RWPE1 (cell line): ENCODE measurements at regions of chr9 and their contacts with region 1.

Region 1: DNA sequence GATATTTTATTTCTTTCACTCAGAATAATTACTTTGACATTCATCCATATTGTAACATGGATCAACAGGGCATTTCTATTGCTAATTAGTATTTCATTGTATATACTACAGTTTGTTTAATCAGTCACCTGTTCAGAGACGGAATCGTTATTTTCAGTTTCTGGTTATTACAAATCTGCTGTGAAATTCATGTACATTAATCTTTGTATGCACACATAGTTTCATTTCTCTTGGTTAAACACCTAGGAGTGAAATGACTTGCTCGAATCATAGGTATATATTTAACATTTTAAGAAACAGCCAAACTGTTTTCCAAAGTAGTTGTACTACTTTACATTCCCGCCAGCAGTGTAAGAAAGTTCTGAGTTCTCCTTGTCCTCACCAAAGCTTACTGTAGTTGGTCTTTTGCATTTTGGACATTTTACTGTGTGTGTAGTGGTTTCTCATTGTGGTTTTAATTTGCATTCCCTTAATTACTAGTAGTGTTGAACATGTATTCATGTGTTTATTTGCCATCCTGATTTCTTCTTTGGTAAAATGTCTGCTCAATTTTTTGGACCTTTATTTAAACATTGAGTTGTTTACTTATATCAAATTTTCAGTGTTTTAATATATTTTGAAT is 198.2 kb downstream of the SAXO1 start:
- DNase-seq: no peak
- H3K27ac ChIP-seq: no peak overlapping the region
- CTCF ChIP-seq: no peak

Region 2: DNA sequence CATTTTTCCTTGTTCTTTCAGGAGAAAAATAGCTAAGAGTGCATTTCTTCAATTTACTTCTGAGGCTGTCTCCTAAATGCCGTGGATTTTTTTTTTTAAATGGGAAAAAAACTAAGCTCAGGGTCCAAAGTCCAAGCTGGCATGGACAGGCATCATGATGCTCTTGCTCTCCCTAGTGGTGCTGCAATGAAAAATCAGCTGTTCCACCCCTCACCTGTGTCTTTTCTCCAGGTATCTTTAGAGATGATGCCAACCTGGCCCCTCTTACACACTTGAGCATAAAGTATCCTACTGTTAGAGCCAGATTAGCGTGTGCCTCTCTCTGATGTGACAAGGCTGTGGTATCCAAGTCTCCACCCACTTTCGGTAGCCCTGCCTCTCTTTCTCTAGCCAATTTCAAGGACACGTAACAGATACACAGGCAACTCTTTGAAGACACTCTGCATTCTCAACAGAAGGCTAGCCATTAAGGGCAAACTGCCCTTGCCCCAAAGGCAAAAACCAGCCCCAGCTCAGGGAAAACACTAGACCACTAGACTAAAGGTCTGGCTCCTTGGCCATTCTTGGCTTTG is 10.7 kb before region 1 on chr9:
- CTCF ChIA-PET with region 1: no interaction called
- POLR2A ChIA-PET with region 1: no interaction called
- DNase-seq: no peak
- H3K27ac ChIP-seq: no peak overlapping the region
- CTCF ChIP-seq: no peak; the same call in 1 of the 2 replicates

Region 3: GRCh38 chr9:18896004-18896403 is 61.2 kb after region 1 on chr9:
- CTCF ChIA-PET with region 1: no interaction called
- POLR2A ChIA-PET with region 1: interaction called, 13 read pairs
- DNase-seq: no peak
- H3K27ac ChIP-seq: no peak overlapping the region
- CTCF ChIP-seq: no peak